ENCODE measurements at regions of chr16 and their contacts with region 1.

Region 1: DNA sequence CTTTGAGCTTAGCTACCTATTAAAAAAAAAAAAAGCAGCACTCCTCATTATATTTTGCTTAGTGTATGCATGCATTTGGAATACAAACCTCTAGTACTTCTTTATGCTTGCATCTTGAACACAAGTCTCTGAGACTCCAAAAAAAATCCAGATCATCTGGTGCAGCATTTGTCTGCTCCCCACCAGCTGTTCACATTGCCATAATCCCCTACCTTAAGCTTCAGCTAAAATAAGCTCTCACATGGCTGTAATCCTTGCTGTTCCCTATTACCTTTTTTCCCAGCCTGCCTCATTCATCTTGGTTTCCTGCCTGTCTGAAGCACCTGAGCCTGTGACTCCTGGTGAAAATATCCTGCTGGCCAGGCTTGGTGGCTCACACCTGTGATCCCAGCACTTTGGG is 7.5 kb upstream of the NFATC2IP start:
- DNase-seq: no peak
- H3K4me3 ChIP-seq: no peak overlapping the region
- H3K27ac ChIP-seq: no peak overlapping the region
- H3K27me3 ChIP-seq: no peaks in the 10 kb centered on the region
- CTCF ChIP-seq: no peak

Region 2: GRCh38 chr16:28623172-28623711 is 320.0 kb before region 1 on chr16:
- CTCF ChIA-PET with region 1: no interaction called
- POLR2A ChIA-PET with region 1: no interaction called
- DNase-seq: no peak
- H3K4me3 ChIP-seq: peak overlapping the region; percentile 25; the same call in 1 of the 2 replicates
- H3K27ac ChIP-seq: no peak overlapping the region
- H3K27me3 ChIP-seq: peaks cover 13% of the 10 kb centered on the region
- CTCF ChIP-seq: no peak

Region 3: DNA sequence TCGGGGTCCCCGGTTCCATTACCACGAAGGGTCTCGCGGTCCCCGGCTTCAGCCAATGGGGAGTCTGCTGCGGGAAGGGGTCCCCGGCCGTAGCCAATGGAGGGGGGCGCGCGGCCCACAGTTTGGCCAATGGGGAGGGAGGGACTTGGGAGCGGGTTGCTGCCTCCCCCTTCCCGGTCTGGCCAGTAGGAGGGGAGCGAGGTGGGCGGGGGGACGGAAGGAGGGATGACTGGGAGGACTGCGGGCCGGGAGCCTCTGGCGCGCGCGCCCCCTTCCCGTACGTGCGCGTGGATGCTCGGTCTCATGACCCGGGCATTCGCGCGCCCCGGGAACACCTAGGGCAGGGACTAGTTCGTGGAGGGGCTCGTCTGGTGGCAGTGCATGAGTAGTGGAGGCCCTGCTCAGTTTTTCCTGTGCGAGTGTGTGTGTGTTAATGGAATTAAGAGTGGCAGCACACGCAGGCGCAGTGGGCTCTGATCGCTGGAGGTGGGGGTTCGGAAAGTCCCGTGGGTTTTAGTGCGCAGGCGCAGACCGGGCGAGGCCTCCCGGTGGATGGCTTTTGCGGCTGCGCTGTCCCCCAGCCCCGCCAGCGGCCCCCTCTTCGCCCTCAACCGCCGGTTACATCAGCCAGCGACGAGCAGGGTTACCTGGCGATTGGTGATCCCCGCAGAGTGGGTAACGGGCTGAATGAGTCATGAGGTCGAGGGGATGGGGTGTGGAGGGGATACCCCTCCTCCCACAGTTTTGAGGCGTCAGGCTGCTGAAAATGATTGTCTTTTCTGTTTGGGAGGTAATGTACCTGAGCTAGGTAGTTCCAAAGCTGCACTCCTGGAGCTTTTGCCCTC is 119.2 kb before region 1 on chr16:
- CTCF ChIA-PET with region 1: interaction called, 10 read pairs
- POLR2A ChIA-PET with region 1: no interaction called
- DNase-seq: peak; percentile 97
- H3K4me3 ChIP-seq: peak overlapping the region; percentile 98
- H3K27ac ChIP-seq: peak overlapping the region; percentile 98
- H3K27me3 ChIP-seq: no peaks in the 10 kb centered on the region
- CTCF ChIP-seq: 0 out of 2 replicates have a peak, but pooled peaks have one; percentile 9

Region 4: GRCh38 chr16:28846080-28846932 is 97.0 kb before region 1 on chr16 and contains the start of gene TUFM:
- CTCF ChIA-PET with region 1: interaction called, 18 read pairs
- POLR2A ChIA-PET with region 1: no interaction called
- DNase-seq: peak; percentile 97
- H3K4me3 ChIP-seq: peak within 1 kb of the TSS; percentile 99
- H3K27ac ChIP-seq: peak within 1 kb of the TSS; percentile 65
- H3K27me3 ChIP-seq: no peaks in the 10 kb centered on the region
- CTCF ChIP-seq: peak; percentile 65
- polyA plus RNA-seq, gene TUFM: 107 and 110 TPM in 2 replicates

Region 5: DNA sequence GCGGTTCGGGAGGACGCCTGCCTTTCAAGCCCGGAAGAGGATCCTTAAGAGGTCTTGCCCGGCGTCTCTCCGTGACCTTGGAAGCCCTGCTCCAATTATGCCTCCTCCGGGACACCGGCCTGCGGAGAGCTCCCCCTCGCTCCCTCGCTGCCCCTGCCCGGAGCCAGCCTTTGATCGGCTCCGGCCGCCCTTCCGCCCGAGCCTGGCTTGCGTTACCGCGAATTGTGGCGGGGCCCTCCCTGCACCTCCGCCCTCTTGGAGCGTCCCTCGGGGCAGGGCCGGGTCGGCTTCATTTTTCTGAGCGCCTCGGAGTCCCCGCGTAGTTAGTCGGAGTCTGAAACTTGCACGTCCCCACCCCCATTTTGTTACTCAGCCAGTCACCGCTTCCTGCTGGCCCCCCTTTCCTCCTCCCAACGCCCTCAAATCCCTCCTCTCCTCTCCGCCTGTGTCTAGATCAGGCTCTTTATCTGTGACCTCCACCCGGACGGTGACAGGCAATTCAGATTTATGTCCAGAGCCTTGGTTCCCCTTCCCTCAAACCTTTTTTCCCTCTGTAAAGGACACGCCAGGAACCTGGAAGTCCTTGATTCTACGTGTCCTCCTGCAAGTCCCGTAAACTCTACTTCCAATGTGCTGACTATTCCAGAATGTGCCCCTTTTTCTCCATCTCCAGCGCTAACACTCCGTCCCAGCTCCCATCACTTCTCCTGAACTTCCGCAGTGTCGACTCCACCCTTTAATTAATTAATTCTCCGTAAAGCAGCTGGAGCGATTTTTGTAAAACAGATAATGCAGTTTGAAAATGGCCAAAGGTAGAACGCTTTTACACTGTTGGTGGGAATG is 17.7 kb before region 1 on chr16:
- CTCF ChIA-PET with region 1: interaction called, 10 read pairs
- POLR2A ChIA-PET with region 1: interaction called, 4 read pairs
- DNase-seq: no peak
- H3K4me3 ChIP-seq: peak overlapping the region; percentile 84
- H3K27ac ChIP-seq: peak overlapping the region; percentile 92
- H3K27me3 ChIP-seq: no peaks in the 10 kb centered on the region
- CTCF ChIP-seq: no peak

Measured in AG04450 (cell line).